Heart left ventricle (tissue), 16 donors: ENCODE measurements at regions of chr6 and their contacts with region 1.

Region 1: GRCh38 chr6:52664186-52664990 is 6.5 kb upstream of the TMEM14A start:
- DNase-seq: peak; percentile 88 to 95 (median 90)
- ATAC-seq: peak; percentile 92 to 99 (median 98)
- H3K4me3 ChIP-seq: peak overlapping the region; percentile 44 to 88 (median 75)
- H3K27ac ChIP-seq: peak overlapping the region in 11 of 12 donors; percentile 33 to 85 (median 66)
- H3K4me1 ChIP-seq: peaks cover 0 to 36% (median 8%) of the 10 kb centered on the region in 12 donors
- H3K27me3 ChIP-seq: peaks cover 0 to 7% (median 0%) of the 10 kb centered on the region in 9 donors
- CTCF ChIP-seq: no peak
- POLR2A ChIP-seq: peak in 1 of 2 donors; percentile 96

Region 2: GRCh38 chr6:52284460-52285176 is 379.8 kb before region 1 on chr6 and contains the start of gene MCM3:
- intact Hi-C with region 1: loop called in 9 of 10 experiments (anchors 2 to 10 kb)
- DNase-seq: peak; percentile 96 to 98 (median 98)
- ATAC-seq: peak; percentile 100
- H3K4me3 ChIP-seq: peak within 1 kb of the TSS; percentile 57 to 99 (median 80)
- H3K27ac ChIP-seq: peak within 1 kb of the TSS in 11 of 12 donors; percentile 32 to 79 (median 67)
- H3K4me1 ChIP-seq: peaks cover 0 to 32% (median 12%) of the 10 kb centered on the region in 12 donors
- H3K27me3 ChIP-seq: no peaks in the 10 kb centered on the region
- CTCF ChIP-seq: peak in 5 of 12 donors; percentile 2 to 43 (median 19)
- POLR2A ChIP-seq: peak in 1 of 2 donors; percentile 50
- total RNA-seq, gene MCM3: 18.5 to 36.5 (median 25.0) TPM

Region 3: DNA sequence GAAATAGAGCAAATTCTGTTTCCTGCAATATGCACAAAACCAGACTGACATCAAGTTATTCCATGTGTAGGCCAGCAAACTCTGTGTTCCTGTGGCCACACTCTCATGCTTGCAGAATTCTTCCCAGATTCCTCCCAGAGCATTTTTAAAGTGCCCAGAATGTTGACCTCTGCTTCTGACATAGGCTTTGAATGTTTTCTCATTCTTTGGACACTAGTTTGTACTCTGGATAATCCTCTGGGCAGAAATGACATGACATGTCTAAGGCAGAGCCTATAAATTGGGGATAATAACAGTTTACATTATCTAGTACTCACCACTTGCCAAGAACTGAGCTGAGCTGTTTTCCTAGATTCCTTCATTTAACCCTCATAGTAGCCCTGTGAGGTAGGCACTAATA is 253.4 kb before region 1 on chr6:
- intact Hi-C with region 1: loop called (anchors 1 to 2 kb)
- DNase-seq: no peak
- ATAC-seq: no peak
- H3K4me3 ChIP-seq: no peak overlapping the region
- H3K27ac ChIP-seq: no peak overlapping the region
- H3K4me1 ChIP-seq: peaks cover 0 to 5% (median 0%) of the 10 kb centered on the region in 12 donors
- H3K27me3 ChIP-seq: no peaks in the 10 kb centered on the region
- CTCF ChIP-seq: no peak
- POLR2A ChIP-seq: no peak

Region 4: DNA sequence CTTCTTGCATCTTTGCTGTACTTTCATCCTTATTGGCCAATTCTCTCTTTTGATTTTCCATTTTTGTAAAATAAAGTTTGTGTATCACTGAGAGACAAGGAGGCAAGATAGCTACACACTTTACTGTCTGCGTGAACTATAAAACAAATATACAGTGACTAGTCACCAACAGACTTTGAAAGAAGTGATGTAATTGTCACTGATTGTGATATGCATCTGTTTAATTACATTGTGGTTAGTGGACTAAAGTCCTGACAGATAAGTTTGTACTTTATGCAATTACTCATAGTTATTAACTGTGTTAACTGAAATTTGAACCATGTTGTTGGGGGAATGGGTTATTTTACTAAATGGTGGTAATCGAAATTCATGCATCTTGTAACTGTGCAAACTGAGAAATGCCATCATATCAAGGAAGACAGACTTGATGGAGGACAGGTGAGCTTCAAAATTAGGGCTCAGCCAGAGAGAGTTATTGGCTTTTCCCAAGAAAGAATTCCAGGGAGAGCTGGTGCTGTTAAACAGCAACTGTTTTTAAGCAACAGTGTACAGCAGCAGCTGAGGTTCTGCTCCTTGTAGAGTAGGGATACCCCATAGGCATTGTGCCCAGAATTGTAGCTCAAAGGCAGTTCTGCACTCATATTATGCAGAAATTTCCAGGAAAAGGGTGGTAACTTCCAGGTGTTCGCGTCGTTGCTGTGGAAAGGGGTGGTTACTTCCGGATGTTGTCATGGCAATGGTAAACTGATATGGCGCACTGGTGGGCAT is 181.3 kb before region 1 on chr6:
- intact Hi-C with region 1: loop called in 1 of 10 experiments (anchors 10 kb)
- DNase-seq: no peak
- ATAC-seq: peak in 1 of 4 donors; percentile 29
- H3K4me3 ChIP-seq: no peak overlapping the region
- H3K27ac ChIP-seq: no peak overlapping the region
- H3K4me1 ChIP-seq: peaks cover 0 to 5% (median 0%) of the 10 kb centered on the region in 12 donors
- H3K27me3 ChIP-seq: no peaks in the 10 kb centered on the region
- CTCF ChIP-seq: no peak
- POLR2A ChIP-seq: no peak

Region 5: DNA sequence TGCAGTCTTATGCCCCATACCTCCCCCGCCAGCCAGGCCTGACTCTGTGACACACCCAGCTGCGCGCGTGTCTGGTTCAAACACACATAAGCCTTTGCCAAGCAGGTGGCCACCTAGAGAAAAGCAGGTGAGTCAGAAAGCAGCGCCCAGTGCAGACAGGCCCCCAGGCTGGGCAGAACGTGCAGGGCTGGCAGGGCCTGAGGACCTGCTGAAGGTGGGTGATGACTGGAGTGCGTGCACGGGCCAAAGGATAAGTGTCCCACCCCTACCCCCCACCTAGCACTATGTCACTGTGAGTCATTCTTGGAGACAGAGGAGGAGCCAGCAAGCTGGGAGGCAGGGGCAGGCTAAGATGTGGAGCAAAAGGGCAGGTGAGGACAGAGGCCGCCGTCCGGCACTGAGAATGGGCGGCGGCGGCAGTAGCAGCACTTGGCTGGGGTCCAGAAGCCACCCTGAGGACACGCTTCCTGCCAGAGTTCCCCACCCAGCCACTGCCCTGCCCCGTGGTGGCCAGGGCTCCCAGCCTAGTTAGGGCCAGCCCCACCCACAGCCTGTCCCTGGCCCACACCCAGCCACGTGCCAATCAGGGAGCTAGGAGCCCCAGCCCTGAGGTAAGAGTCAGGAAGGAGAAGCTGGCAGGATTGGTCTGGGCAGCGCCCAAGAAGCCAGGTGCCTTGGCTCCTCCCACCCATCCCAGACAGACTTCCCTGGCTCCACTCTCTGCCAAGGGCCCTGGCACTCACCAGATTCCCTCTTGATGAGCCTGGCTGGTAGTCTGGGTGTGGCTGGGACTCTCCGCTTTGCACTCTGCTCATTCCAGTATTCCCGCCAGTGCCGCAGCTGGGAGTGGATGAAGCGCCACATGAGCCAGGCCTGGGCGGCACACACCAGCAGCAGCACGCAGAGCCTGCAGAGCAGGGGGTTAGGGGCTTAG is 160.3 kb before region 1 on chr6:
- intact Hi-C with region 1: loop called in 3 of 10 experiments (anchors 5 to 10 kb)
- DNase-seq: peak; percentile 89 to 94 (median 92)
- ATAC-seq: peak; percentile 84 to 90 (median 86)
- H3K4me3 ChIP-seq: no peak overlapping the region
- H3K27ac ChIP-seq: peak overlapping the region; percentile 50 to 88 (median 78)
- H3K4me1 ChIP-seq: peaks cover 11 to 75% (median 47%) of the 10 kb centered on the region in 12 donors
- H3K27me3 ChIP-seq: no peaks in the 10 kb centered on the region
- CTCF ChIP-seq: no peak
- POLR2A ChIP-seq: no peak

Region 6: DNA sequence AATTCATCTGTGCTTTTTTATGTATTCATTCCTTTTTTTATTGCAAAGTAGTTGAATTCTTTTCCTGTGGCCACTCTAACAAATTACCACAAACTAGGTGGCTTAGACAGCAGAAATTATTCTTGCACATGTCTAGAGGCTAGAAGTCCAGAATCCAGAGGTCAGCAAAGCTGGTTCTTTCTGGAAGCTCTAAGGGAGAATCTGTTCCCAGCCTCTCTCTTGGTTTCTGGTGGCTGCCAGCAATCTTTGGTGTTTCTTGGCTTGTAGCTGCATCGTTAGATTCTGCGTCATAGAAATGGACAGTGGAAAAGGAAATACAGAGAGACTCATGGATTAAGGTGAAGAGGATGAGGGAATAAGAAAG is 59.6 kb after region 1 on chr6:
- intact Hi-C with region 1: no loop called
- DNase-seq: no peak
- ATAC-seq: peak in 3 of 4 donors; percentile 53 to 69 (median 58)
- H3K4me3 ChIP-seq: no peak overlapping the region
- H3K27ac ChIP-seq: peak overlapping the region in 2 of 12 donors; percentile 13 to 70
- H3K4me1 ChIP-seq: peaks cover 0 to 4% (median 0%) of the 10 kb centered on the region in 12 donors
- H3K27me3 ChIP-seq: no peaks in the 10 kb centered on the region
- CTCF ChIP-seq: no peak
- POLR2A ChIP-seq: no peak